Right ventricle myocardium inferior (tissue), 1 donor: ENCODE measurements at regions of chr3 and their contacts with region 1.

Region 1: GRCh38 chr3:177359593-177360357 is 162.5 kb upstream of the TBL1XR1 start:
- DNase-seq: peak; percentile 98
- ATAC-seq: peak; percentile 92

Region 2: DNA sequence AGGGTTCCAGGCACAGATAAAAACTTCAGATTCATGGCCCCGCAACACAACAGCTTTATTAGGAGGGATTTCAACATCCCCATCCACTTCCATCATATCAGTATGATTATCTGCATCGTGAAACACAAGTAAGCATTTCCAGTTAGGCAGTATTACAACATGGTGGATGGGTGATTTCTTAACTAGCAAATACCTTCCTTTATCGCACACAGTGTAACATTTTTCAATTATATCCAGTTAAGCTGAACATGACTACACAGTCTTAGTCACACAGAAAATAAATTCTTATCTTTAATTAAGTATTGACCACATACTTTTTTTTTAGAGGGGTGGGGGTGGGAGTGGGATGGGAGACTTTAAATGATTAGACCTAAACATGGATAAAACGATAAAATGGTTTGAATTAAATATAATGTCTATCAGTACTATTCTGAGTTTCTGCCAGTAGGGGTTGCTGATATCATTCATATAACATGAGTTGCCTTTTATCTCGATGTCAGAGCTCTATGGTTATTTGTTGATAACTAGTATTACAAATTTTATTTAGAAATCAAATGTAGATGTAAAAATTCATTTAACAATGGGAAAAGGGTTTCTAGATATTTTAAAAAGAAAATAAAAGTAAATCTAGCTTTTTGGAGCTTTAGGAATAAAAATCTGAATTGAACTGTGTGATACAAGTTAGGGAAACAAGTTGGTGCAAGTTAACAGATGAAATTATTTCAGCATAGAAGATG is 309.1 kb before region 1 on chr3:
- intact Hi-C with region 1: loop called (anchors 2 kb)
- DNase-seq: no peak
- ATAC-seq: peak; percentile 70

Region 3: GRCh38 chr3:177197041-177197727 is 162.6 kb before region 1 on chr3 and contains the start of gene TBL1XR1:
- intact Hi-C with region 1: loop called (anchors 1 kb)
- DNase-seq: peak; percentile 93
- ATAC-seq: peak; percentile 93
- total RNA-seq, gene TBL1XR1: 96.8 TPM

Region 4: GRCh38 chr3:177396716-177397115 is 36.9 kb after region 1 on chr3:
- intact Hi-C with region 1: no loop called
- DNase-seq: no peak
- ATAC-seq: no peak

Region 5: DNA sequence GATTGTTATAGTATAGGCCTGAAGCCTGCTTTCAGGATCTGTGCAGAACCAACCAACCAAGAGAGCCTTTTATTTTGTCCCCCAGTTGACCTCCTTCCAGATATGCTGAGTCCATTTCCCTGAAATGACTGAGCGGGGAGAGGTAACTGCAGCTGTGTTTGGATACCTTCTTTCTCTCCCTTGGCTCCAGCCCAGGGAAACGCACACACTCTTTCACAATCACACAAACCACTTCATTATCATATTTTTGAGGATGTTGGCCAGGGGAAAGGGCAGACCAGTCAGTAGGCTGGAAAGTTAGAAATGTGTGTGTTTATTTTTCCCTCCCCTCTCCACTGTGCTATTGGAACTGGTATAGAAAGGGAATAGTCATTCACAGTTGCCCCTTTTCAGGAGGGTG is 255.2 kb after region 1 on chr3:
- intact Hi-C with region 1: loop called (anchors 5 kb)
- DNase-seq: peak; percentile 83
- ATAC-seq: peak; percentile 86

Region 6: DNA sequence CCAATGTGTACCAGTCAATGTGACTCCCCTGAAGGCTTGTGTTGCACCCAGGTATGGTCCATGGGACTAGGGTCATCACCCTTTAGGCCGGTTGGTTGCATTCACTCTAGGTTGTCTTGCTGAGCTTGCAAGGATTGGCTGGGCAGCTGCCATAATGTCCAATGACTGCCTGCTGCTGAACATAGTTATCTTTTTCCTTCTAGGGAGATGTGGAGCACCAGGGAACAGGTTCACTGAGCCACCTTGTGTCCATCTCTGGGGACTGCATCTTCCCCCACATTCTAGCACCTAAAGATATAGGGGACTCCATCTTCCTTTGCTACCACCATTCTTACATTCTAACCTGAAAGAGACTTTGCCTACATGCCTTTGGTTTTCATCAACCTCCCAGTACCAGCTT is 417.9 kb after region 1 on chr3:
- intact Hi-C with region 1: loop called (anchors 10 kb)
- DNase-seq: peak; percentile 43
- ATAC-seq: no peak

Region 7: GRCh38 chr3:178155521-178155920 is 795.7 kb after region 1 on chr3:
- intact Hi-C with region 1: loop called (anchors 10 kb)
- DNase-seq: no peak
- ATAC-seq: no peak

Region 8: GRCh38 chr3:178385280-178385952 is 1025.6 kb after region 1 on chr3:
- intact Hi-C with region 1: loop called (anchors 5 kb)
- DNase-seq: no peak
- ATAC-seq: peak; percentile 86